ENCODE measurements at regions of chr16 and their contacts with region 1.

Region 1: GRCh38 chr16:69535123-69536050 is 30.4 kb upstream of the NFAT5 start:
- DNase-seq: no peak
- H3K4me3 Mint-ChIP-seq: no peak overlapping the region
- H3K27ac Mint-ChIP-seq: no peak overlapping the region
- H3K4me1 Mint-ChIP-seq: peaks cover 21% of the 10 kb centered on the region
- H3K27me3 Mint-ChIP-seq: no peaks in the 10 kb centered on the region

Region 2: DNA sequence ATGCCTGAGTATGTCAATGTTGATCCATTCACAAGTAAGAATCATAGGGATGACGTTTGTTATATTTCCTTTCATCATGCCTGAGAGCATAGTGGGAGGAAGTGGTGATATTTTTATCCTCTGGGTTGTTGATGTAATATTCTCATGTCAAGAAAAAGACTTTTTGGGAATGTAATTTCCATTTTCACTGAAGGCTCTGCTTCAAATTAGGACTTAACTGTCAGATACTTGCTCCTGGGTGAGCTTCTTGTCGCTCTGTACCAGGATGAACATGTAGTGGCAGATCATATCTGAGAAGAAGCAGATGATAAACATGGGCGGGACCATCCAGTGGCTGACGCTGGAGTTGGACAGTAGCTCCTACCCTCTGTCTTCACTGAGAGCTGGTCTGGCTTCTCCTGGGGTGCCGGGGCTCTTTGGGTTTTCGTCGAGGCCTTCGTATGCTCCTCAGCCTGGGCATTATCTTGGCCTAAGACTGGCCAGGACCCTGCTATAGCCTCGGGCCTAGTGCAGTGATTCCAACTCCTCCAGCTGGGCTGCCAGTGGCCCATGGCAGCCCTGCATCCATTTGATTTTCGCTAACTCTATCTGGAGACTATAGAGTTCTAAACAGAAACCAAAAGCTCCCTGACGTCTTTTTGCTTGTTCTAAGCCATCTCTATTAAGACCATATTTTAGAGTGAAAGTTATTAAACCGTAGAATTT is 91.3 kb before region 1 on chr16:
- CTCF ChIA-PET with region 1: no interaction called
- POLR2A ChIA-PET with region 1: no interaction called
- intact Hi-C with region 1: loop called (anchors 1 kb)
- DNase-seq: peak; percentile 41
- H3K4me3 Mint-ChIP-seq: peak overlapping the region; percentile 62
- H3K27ac Mint-ChIP-seq: peak overlapping the region; percentile 88
- H3K4me1 Mint-ChIP-seq: peaks cover 39% of the 10 kb centered on the region
- H3K27me3 Mint-ChIP-seq: no peaks in the 10 kb centered on the region

Region 3: GRCh38 chr16:69465083-69465721 is 70.2 kb before region 1 on chr16:
- CTCF ChIA-PET with region 1: no interaction called
- POLR2A ChIA-PET with region 1: interaction called, 3 read pairs
- intact Hi-C with region 1: loop called (anchors 2 kb)
- DNase-seq: peak; percentile 26
- H3K4me3 Mint-ChIP-seq: peak overlapping the region; percentile 3
- H3K27ac Mint-ChIP-seq: peak overlapping the region; percentile 44
- H3K4me1 Mint-ChIP-seq: peaks cover 51% of the 10 kb centered on the region
- H3K27me3 Mint-ChIP-seq: no peaks in the 10 kb centered on the region

Region 4: DNA sequence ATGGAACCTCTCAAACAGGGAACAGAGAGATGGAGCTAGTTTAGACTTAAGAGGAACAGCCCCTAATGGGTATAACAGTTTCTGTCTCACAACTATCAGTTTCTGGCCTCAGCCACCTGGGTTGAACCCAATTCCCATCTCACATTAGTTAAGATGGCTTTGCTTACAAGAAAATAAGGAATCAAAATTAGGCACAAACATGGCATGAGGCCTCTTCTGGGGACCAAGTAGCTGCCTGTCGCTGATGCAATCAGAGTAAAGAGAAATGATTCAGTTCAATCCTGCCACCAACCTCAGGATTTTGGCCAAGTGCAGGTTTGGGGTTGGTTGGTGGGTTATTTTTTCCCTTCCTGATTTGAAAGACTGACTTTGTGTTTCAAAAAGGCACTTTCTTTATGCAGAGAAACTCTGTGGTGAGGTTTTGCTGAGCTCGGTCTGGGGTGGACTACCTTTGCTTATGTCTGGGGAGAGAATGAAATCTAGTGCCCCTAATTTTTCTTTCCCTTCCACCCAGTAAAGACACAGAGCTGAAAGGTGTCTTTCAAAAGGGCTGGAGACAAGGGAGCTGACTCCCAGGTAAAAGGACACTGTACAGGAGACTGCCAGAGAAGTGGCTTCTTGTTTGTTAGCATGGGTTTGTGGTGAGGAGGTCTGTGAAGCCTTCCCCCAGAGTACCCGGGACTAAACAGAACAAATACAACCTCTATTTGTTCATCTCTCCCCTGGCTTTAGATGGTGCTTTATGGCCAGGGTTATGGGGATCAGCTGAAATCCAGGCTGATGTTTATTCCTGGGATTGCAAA is 14.4 kb before region 1 on chr16:
- CTCF ChIA-PET with region 1: interaction called, 6 read pairs
- POLR2A ChIA-PET with region 1: interaction called, 17 read pairs
- intact Hi-C with region 1: loop called (anchors 1 kb)
- DNase-seq: peak; percentile 78
- H3K4me3 Mint-ChIP-seq: no peak overlapping the region
- H3K27ac Mint-ChIP-seq: peak overlapping the region; percentile 79
- H3K4me1 Mint-ChIP-seq: peaks cover 19% of the 10 kb centered on the region
- H3K27me3 Mint-ChIP-seq: no peaks in the 10 kb centered on the region

Measured in activated CD4-positive, alpha-beta memory T cell treated with anti-CD3 and anti-CD28 coated beads for 36 hours (primary cell).